ENCODE measurements at regions of chr14 and their contacts with region 1.

Region 1: GRCh38 chr14:60184146-60184904 is 19.1 kb upstream of the DHRS7 start:
- DNase-seq: no peak
- H3K4me3 Mint-ChIP-seq: peak overlapping the region; percentile 63
- H3K27ac Mint-ChIP-seq: peak overlapping the region; percentile 66
- H3K4me1 Mint-ChIP-seq: peaks cover 14% of the 10 kb centered on the region
- H3K27me3 Mint-ChIP-seq: peaks cover 2% of the 10 kb centered on the region

Region 2: GRCh38 chr14:59507063-59507780 is 677.1 kb before region 1 on chr14:
- intact Hi-C with region 1: loop called (anchors 10 kb)
- DNase-seq: peak; percentile 33
- H3K4me3 Mint-ChIP-seq: no peak overlapping the region
- H3K27ac Mint-ChIP-seq: no peak overlapping the region
- H3K4me1 Mint-ChIP-seq: peaks cover 4% of the 10 kb centered on the region
- H3K27me3 Mint-ChIP-seq: peaks cover 9% of the 10 kb centered on the region

Region 3: DNA sequence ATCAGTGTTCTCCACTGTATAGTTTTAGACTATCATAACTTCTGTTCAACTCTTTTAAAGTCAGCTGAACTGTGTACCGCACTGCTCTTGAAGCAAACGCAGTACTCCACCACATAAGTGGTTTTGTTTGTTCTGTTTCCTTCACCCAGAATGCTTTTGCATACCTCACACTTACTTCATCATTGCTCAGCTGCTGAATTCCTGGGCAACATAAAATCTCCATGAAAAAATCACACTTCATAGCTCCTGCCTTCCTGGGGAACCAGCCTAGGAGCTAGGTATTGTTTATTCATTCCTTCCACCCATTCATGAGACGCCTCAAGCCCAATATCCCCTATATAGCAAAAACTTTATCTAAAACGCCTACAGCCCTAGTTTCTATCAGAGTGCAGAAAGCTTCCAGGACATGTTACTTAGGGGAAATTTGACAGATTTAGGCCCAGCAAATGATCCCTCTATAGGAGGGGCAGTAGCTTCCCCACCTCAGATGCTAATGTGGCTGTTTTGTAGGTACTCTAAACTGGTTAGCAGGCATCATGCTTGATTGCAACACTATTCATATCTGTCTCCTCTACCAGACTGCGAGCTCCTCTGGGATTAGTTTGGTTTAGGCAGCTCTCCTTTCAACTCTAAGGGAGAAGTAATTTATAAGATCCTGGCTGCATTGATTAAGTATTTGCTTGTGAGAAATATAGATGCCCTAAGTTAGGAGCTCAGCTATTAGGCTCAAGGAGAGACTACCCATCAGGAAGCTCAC is 219.9 kb before region 1 on chr14:
- intact Hi-C with region 1: loop called (anchors 1 kb)
- DNase-seq: no peak
- H3K4me3 Mint-ChIP-seq: no peak overlapping the region
- H3K27ac Mint-ChIP-seq: no peak overlapping the region
- H3K4me1 Mint-ChIP-seq: peaks cover 13% of the 10 kb centered on the region
- H3K27me3 Mint-ChIP-seq: peaks cover 9% of the 10 kb centered on the region

Region 4: GRCh38 chr14:60064491-60065072 is 119.7 kb before region 1 on chr14:
- intact Hi-C with region 1: loop called (anchors 1 kb)
- DNase-seq: no peak
- H3K4me3 Mint-ChIP-seq: no peak overlapping the region
- H3K27ac Mint-ChIP-seq: no peak overlapping the region
- H3K4me1 Mint-ChIP-seq: no peaks in the 10 kb centered on the region
- H3K27me3 Mint-ChIP-seq: peaks cover 5% of the 10 kb centered on the region

Region 5: GRCh38 chr14:60164712-60165546 is 19.4 kb before region 1 on chr14 and contains the start of gene DHRS7:
- intact Hi-C with region 1: loop called (anchors 1 kb)
- DNase-seq: peak; percentile 58
- H3K4me3 Mint-ChIP-seq: peak within 1 kb of the TSS; percentile 94
- H3K27ac Mint-ChIP-seq: peak within 1 kb of the TSS; percentile 95
- H3K4me1 Mint-ChIP-seq: peaks cover 25% of the 10 kb centered on the region
- H3K27me3 Mint-ChIP-seq: no peaks in the 10 kb centered on the region
- total RNA-seq, gene DHRS7: 52.9 and 55.8 TPM in 2 replicates

Region 6: DNA sequence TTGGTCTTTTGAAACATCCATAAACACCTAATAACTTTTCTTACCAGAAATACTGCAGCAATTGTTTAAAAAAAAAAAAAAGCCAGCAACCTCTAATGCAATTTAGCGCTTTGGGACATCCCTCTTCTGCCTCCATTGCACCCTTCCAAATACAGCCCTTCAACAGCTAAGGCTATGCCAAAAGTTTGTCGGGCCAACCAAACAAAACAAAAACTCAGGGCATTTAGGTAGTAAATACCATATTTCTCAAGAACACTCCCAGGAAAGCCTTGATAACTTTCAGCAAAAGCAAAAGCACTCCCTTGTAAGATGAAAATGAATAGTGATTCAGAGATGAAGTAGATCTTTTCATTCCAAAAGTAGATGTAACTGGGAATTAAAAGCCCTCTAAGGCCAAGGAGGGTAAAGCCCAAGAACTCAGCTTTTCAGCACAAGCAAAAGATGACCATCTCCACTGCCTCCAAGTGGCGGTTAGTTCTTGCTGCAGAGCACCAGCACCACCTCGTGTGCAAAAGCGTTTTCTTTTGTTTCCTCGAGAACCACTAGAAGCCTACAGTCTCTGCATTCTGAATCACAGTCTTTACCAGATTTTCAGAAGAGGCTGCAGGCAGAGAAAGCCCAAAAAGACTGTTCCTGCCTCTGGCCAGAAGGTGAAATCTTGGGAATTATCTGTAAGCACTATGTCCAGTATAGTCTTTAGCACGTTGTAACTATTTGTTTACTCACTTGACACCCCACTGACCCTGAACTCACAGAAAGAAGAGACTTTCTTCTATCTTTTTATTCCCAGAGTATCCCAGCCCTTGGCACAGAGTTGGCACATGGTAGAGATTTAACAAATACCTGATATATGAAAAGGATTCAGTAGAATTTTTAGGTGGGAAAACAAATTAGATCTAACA is 377.8 kb after region 1 on chr14:
- intact Hi-C with region 1: loop called (anchors 5 kb)
- DNase-seq: no peak
- H3K4me3 Mint-ChIP-seq: no peak overlapping the region
- H3K27ac Mint-ChIP-seq: no peak overlapping the region
- H3K4me1 Mint-ChIP-seq: no peaks in the 10 kb centered on the region
- H3K27me3 Mint-ChIP-seq: peaks cover 12% of the 10 kb centered on the region